Caco-2 (cell line): ENCODE measurements at regions of chr12 and their contacts with region 1.

Region 1: GRCh38 chr12:82896979-82897378 is 210.3 kb downstream of the TMTC2 start:
- DNase-seq: peak in 1 of 2 experiments; percentile 12
- H3K4me3 ChIP-seq: no peak overlapping the region
- H3K4me3 Mint-ChIP-seq: no peak overlapping the region
- H3K27ac Mint-ChIP-seq: no peak overlapping the region
- H3K4me1 ChIP-seq: peaks cover 14% of the 10 kb centered on the region; the same call in 1 of the 2 replicates
- H3K4me1 Mint-ChIP-seq: no peaks in the 10 kb centered on the region
- H3K27me3 ChIP-seq: no peaks in the 10 kb centered on the region
- H3K27me3 Mint-ChIP-seq: peaks cover 2% of the 10 kb centered on the region
- CTCF ChIP-seq: no peak

Region 2: GRCh38 chr12:82708061-82708879 is 188.7 kb before region 1 on chr12:
- CTCF ChIA-PET with region 1: no interaction called
- POLR2A ChIA-PET with region 1: no interaction called
- intact Hi-C with region 1: no loop called
- DNase-seq: no peak
- H3K4me3 ChIP-seq: no peak overlapping the region
- H3K4me3 Mint-ChIP-seq: no peak overlapping the region
- H3K27ac Mint-ChIP-seq: no peak overlapping the region
- H3K4me1 ChIP-seq: no peaks in the 10 kb centered on the region
- H3K4me1 Mint-ChIP-seq: no peaks in the 10 kb centered on the region
- H3K27me3 ChIP-seq: no peaks in the 10 kb centered on the region
- H3K27me3 Mint-ChIP-seq: no peaks in the 10 kb centered on the region
- CTCF ChIP-seq: no peak

Region 3: DNA sequence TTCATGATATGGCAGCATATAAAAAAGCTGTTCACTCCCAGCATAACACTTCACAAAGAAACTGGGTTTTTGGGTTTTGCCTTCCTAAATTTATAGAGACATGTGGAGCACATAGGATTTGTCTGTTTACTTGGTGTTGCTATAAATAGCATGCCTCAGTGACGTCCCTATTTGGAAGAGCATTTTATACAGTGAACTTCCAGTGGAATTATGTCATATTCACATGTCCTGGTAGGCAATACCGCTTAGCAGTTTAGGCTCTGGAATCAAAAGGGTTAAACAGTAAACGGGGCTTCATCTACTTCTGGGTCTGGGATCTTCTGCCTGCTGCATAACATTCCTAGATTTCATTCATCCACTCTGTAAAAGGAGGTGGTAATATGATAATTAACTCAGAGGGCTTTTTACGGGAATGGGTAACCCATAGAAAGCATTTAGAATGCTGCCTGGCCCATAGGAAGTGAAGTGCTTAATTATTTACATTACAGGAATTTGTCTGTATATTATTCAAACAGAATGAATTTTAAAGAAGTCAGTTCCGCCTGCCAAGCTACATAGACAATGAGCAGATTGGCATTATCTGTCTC is 185.8 kb after region 1 on chr12:
- CTCF ChIA-PET with region 1: no interaction called
- POLR2A ChIA-PET with region 1: no interaction called
- intact Hi-C with region 1: loop called (anchors 10 kb)
- DNase-seq: no peak
- H3K4me3 ChIP-seq: no peak overlapping the region
- H3K4me3 Mint-ChIP-seq: no peak overlapping the region
- H3K27ac Mint-ChIP-seq: no peak overlapping the region
- H3K4me1 ChIP-seq: no peaks in the 10 kb centered on the region
- H3K4me1 Mint-ChIP-seq: no peaks in the 10 kb centered on the region
- H3K27me3 ChIP-seq: no peaks in the 10 kb centered on the region
- H3K27me3 Mint-ChIP-seq: no peaks in the 10 kb centered on the region
- CTCF ChIP-seq: no peak